PC-9 (cell line): ENCODE measurements at regions of chr13 and their contacts with region 1.

Region 1: DNA sequence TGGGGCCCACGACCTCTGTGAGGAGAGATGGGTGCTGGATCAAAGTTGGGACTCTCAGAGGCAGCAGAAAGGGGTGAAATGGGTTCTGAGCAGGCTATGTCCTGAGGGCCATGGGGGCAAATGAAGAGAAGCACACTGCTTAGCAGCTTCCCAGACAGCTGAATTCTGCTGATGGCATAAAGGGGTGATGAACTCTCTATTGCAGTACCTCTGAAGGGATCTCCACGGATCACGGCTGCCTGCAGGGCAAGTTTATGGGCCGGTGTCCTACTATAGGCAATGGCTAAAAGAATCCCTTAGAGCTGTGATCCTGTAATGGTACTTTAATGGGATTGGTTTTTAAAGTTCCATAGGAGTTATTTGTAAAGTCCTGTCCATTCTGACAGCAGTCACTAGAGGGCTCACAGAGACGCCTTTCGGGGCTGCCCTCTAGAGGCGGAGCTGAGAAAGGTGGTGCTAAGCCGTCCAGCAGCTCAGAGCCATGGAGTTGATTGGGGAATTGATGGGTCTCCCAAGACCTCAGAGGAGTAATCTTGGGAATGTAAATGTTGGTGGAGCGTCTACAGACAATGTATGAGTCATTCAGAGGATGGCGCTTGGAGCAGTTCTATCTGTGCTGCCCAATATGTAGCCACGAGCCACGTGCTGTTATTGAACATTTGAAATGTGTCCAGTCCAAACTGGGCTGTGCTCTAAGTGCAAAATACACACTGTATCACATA is 287.3 kb downstream of the COG6 start:
- DNase-seq: peak; percentile 53 to 59
- H3K4me3 ChIP-seq: no peak overlapping the region
- H3K27ac ChIP-seq: no peak overlapping the region
- H3K4me1 ChIP-seq: no peaks in the 10 kb centered on the region
- H3K27me3 ChIP-seq: no peaks in the 10 kb centered on the region
- CTCF ChIP-seq: peak; percentile 84

Region 2: GRCh38 chr13:39787086-39787487 is 155.6 kb before region 1 on chr13:
- CTCF ChIA-PET with region 1: no interaction called
- POLR2A ChIA-PET with region 1: no interaction called
- intact Hi-C with region 1: loop called (anchors 5 kb)
- DNase-seq: no peak
- H3K4me3 ChIP-seq: no peak overlapping the region
- H3K27ac ChIP-seq: no peak overlapping the region
- H3K4me1 ChIP-seq: no peaks in the 10 kb centered on the region
- H3K27me3 ChIP-seq: no peaks in the 10 kb centered on the region
- CTCF ChIP-seq: no peak

Region 3: GRCh38 chr13:39823063-39823713 is 119.5 kb before region 1 on chr13:
- CTCF ChIA-PET with region 1: no interaction called
- POLR2A ChIA-PET with region 1: no interaction called
- intact Hi-C with region 1: no loop called
- DNase-seq: no peak
- H3K4me3 ChIP-seq: no peak overlapping the region
- H3K27ac ChIP-seq: no peak overlapping the region
- H3K4me1 ChIP-seq: no peaks in the 10 kb centered on the region
- H3K27me3 ChIP-seq: no peaks in the 10 kb centered on the region
- CTCF ChIP-seq: no peak

Region 4: GRCh38 chr13:40371531-40372125 is 428.9 kb after region 1 on chr13:
- CTCF ChIA-PET with region 1: no interaction called
- POLR2A ChIA-PET with region 1: no interaction called
- intact Hi-C with region 1: no loop called
- DNase-seq: no peak
- H3K4me3 ChIP-seq: no peak overlapping the region
- H3K27ac ChIP-seq: no peak overlapping the region
- H3K4me1 ChIP-seq: no peaks in the 10 kb centered on the region
- H3K27me3 ChIP-seq: no peaks in the 10 kb centered on the region
- CTCF ChIP-seq: no peak

Region 5: DNA sequence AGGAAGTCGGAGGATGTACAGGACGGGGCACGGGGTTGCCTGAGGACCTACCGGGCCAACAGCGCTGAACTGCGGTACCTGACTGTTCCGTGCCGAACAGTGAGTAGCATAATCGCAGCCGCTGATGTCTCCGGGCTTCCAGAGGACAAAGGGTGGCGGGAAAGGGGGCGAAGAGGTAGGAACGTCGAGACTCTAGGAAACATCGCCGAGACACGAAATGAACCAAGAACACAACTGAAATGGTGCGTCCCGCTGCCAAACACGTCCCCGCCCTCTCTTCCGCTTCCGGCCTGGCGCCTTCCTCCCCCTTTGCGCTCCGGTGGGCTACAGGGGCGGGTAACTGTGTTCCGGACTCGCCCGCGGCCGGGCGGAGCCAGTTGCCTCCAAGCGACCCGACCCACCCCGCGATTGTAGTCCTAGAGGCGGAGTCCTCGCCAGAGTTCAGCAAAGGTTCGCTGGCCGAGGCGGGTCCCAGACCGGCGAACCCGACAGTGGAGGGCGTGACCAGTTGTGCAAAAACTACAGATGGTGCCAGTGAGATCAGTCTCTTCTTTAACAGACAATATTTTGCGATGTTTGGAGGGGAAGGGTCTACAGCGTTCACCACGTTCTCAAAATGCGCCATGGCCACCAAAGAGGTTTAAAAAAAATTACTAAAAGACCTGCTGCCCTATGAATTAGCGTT is 828.4 kb after region 1 on chr13 and contains the start of gene MRPS31:
- CTCF ChIA-PET with region 1: no interaction called
- POLR2A ChIA-PET with region 1: no interaction called
- intact Hi-C with region 1: loop called (anchors 5 kb)
- DNase-seq: peak; percentile 80 to 92
- H3K4me3 ChIP-seq: peak within 1 kb of the TSS; percentile 75
- H3K27ac ChIP-seq: peak within 1 kb of the TSS; percentile 57
- H3K4me1 ChIP-seq: peaks cover 6% of the 10 kb centered on the region; the same call in 1 of the 2 replicates
- H3K27me3 ChIP-seq: no peaks in the 10 kb centered on the region
- CTCF ChIP-seq: no peak
- total RNA-seq, gene MRPS31: 14.5 and 22.2 TPM in 2 replicates